Dendritic cell treated with granulocyte-macrophage colony-stimulating factor and Interleukin-4, amounts not matched to agents 40 ng/mL and 50 ng/mL, for 4 days (primary cell): ENCODE measurements at regions of chr22 and their contacts with region 1.

Region 1: DNA sequence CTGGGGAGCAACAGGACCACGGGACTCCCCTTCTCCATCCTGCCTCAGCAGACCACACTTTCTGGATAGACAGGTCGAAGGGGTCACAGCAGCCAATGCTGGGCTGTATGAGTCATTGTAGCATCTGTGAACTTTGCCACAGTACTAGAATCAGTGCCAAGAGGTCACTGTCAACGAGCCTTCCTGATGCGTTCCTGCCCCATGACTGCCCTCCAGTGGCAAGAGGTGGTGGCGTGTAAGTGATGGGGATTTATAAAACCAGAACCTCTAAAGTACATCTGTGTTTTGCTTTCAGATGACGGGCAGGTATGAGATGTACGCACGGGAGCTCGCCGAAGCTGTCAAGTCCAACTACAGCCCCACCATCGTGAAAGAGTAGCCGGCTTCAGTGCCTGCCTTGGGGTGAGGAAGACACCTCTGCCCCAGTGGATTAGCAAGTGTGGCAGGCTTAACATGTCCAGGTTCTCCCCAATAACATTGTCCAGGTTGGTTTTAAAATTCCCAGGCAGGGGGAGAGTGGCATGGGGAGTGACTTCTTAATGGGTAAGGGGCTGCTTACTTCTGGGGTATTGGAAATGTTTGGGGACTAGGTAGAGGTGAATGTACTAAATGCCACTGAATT is 29.4 kb downstream of the GUCD1 start:
- H3K4me3 Mint-ChIP-seq: no peak overlapping the region
- H3K27ac Mint-ChIP-seq: no peak overlapping the region
- H3K4me1 Mint-ChIP-seq: peaks cover 23% of the 10 kb centered on the region
- H3K27me3 Mint-ChIP-seq: peaks cover 1% of the 10 kb centered on the region

Region 2: GRCh38 chr22:24189249-24190158 is 336.0 kb before region 1 on chr22:
- intact Hi-C with region 1: loop called (anchors 10 kb)
- H3K4me3 Mint-ChIP-seq: no peak overlapping the region
- H3K27ac Mint-ChIP-seq: peak overlapping the region; percentile 78
- H3K4me1 Mint-ChIP-seq: peaks cover 41% of the 10 kb centered on the region
- H3K27me3 Mint-ChIP-seq: no peaks in the 10 kb centered on the region

Region 3: GRCh38 chr22:24325105-24325757 is 200.3 kb before region 1 on chr22:
- intact Hi-C with region 1: loop called (anchors 1 kb)
- H3K4me3 Mint-ChIP-seq: no peak overlapping the region
- H3K27ac Mint-ChIP-seq: no peak overlapping the region
- H3K4me1 Mint-ChIP-seq: peaks cover 18% of the 10 kb centered on the region
- H3K27me3 Mint-ChIP-seq: no peaks in the 10 kb centered on the region

Region 4: GRCh38 chr22:24423519-24424000 is 102.0 kb before region 1 on chr22:
- intact Hi-C with region 1: loop called (anchors 1 kb)
- H3K4me3 Mint-ChIP-seq: peak overlapping the region; percentile 63
- H3K27ac Mint-ChIP-seq: no peak overlapping the region
- H3K4me1 Mint-ChIP-seq: peaks cover 68% of the 10 kb centered on the region
- H3K27me3 Mint-ChIP-seq: peaks cover 41% of the 10 kb centered on the region

Region 5: DNA sequence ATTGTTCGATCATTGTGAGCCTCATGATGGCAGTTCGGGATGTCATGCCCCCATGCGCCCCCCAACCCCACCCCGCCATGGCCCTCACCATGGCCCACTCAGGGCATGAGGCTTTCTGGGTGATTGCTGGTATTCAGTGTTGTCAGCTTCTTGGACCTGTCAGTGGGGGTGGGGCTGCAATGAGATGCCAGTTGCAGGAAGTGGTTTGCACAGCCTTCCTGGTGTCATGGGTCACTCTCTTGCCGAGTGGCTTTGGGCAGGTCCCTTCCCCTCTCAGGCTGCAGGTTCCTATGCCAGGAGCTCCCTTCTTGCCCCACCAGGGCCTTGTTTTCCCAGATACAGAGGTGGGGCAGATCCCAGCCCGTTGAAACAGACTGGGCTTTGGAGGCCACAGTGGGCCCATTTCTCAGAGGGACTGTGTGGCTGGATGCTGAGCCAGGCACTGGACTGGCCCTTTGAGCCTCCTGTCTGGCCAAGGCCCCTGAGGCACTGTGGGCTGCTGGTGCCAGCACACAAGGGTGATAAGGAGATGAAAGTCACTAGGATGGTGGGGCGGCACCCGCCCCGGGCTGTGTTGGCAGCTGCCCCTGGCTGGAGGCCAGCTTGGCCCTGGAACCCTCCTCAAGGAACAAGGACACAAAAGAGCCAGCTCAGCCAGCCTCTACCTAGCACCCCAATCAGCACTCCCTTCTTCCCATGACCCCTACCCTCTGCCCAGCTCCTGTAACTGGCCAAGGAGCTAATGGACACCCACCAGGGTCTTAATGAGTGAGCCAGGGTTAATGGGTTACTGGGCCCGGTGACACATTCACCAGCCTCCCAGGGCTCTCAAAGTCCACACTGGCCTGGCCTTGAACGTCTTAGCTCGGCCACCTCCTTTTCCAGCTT is 75.9 kb after region 1 on chr22:
- intact Hi-C with region 1: no loop called
- H3K4me3 Mint-ChIP-seq: no peak overlapping the region
- H3K27ac Mint-ChIP-seq: peak overlapping the region; percentile 39
- H3K4me1 Mint-ChIP-seq: peaks cover 34% of the 10 kb centered on the region
- H3K27me3 Mint-ChIP-seq: no peaks in the 10 kb centered on the region